Breast epithelium (tissue), 4 donors: ENCODE measurements at regions of chr2 and their contacts with region 1.

Region 1: GRCh38 chr2:234240917-234241316 is 190.4 kb downstream of the SPP2 start:
- DNase-seq: no peak
- H3K4me3 ChIP-seq: no peak overlapping the region
- H3K27ac ChIP-seq: no peak overlapping the region
- H3K4me1 ChIP-seq: no peaks in the 10 kb centered on the region
- H3K27me3 ChIP-seq: no peaks in the 10 kb centered on the region
- CTCF ChIP-seq: no peak
- POLR2A ChIP-seq: no peak

Region 2: GRCh38 chr2:232721882-232722281 is 1519.0 kb before region 1 on chr2:
- intact Hi-C with region 1: no loop called
- DNase-seq: no peak
- H3K4me3 ChIP-seq: no peak overlapping the region
- H3K27ac ChIP-seq: no peak overlapping the region
- H3K4me1 ChIP-seq: no peaks in the 10 kb centered on the region
- H3K27me3 ChIP-seq: no peaks in the 10 kb centered on the region
- CTCF ChIP-seq: no peak
- POLR2A ChIP-seq: no peak

Region 3: DNA sequence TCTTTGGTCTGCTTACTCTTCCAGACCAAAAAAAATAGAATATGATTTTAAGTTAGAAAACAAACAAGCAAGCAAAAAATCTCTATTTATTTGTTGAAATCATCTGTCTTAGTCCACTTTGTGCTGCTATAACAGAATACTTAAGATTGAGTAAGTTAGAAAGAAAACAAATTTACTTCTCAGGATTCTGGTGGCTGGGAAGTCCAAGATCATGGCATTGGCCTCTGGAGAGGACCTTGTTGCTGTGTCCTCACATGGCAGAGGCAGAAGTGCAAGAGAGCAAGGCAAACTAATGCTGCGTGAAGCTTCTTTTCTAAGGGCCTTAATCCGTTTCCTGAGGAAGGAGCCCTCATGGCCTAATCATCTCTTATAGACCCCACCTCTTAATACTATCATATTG is 34.2 kb before region 1 on chr2:
- intact Hi-C with region 1: loop called (anchors 1 kb)
- DNase-seq: no peak
- H3K4me3 ChIP-seq: no peak overlapping the region
- H3K27ac ChIP-seq: no peak overlapping the region
- H3K4me1 ChIP-seq: no peaks in the 10 kb centered on the region
- H3K27me3 ChIP-seq: no peaks in the 10 kb centered on the region
- CTCF ChIP-seq: no peak
- POLR2A ChIP-seq: no peak